Panc1 (cell line): ENCODE measurements at regions of chrX and their contacts with region 1.

Region 1: GRCh38 chrX:134711135-134711921 is 53.1 kb upstream of the PLAC1 start:
- DNase-seq: no peak
- ATAC-seq: no peak
- H3K4me3 ChIP-seq: no peak overlapping the region
- H3K27ac ChIP-seq: no peak overlapping the region
- H3K4me1 ChIP-seq: no peaks in the 10 kb centered on the region
- H3K27me3 ChIP-seq: no peaks in the 10 kb centered on the region
- CTCF ChIP-seq: no peak

Region 2: GRCh38 chrX:134622056-134622812 is 89.1 kb before region 1 on chrX:
- CTCF ChIA-PET with region 1: no interaction called
- POLR2A ChIA-PET with region 1: interaction called, 11 read pairs
- in situ Hi-C with region 1: no loop called
- intact Hi-C with region 1: no loop called
- DNase-seq: peak; percentile 35
- ATAC-seq: peak; percentile 81
- H3K4me3 ChIP-seq: no peak overlapping the region
- H3K27ac ChIP-seq: peak overlapping the region; percentile 32; the same call in 1 of the 2 replicates
- H3K4me1 ChIP-seq: peaks cover 6% of the 10 kb centered on the region
- H3K27me3 ChIP-seq: no peaks in the 10 kb centered on the region
- CTCF ChIP-seq: no peak

Region 3: DNA sequence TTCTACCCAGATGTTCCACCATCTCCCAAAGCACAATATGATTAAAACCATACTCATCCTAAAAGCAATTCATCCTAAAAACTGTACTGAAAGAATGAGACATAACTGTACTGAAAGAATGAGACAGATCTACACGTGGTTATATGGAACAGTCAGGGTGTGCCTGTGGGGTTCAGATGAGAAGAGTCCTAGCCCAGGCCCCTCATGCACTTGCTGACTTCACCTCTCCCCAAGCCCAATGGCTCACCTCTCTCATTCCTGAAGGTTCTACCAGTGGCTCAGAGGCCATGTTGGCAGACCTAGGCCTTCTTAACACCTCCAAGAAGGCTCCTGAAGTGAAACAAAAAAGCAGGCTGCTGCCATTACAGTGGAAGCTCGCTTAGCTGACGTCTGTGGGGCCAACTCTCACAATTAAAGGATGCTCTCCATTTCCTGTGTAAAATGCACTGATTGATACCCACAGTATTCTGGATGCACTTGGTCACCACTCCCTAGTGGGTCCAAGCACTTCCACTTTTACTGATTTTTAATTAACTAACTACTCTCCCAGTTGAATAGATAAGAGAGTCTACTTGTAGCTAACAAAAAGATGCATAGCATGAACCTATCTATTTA is 56.8 kb before region 1 on chrX:
- CTCF ChIA-PET with region 1: no interaction called
- POLR2A ChIA-PET with region 1: no interaction called
- in situ Hi-C with region 1: no loop called
- intact Hi-C with region 1: no loop called
- DNase-seq: no peak
- ATAC-seq: no peak
- H3K4me3 ChIP-seq: no peak overlapping the region
- H3K27ac ChIP-seq: no peak overlapping the region
- H3K4me1 ChIP-seq: no peaks in the 10 kb centered on the region
- H3K27me3 ChIP-seq: no peaks in the 10 kb centered on the region
- CTCF ChIP-seq: no peak